Activated CD4-positive, alpha-beta T cell treated with anti-CD3 and anti-CD28 coated beads for 36 hours (primary cell): ENCODE measurements at regions of chr15 and their contacts with region 1.

Region 1: GRCh38 chr15:75453703-75454470 is 2.4 kb upstream of the SIN3A start:
- DNase-seq: peak; percentile 98
- ATAC-seq: peak; percentile 40
- H3K4me3 Mint-ChIP-seq: peak overlapping the region; percentile 99
- H3K27ac Mint-ChIP-seq: peak overlapping the region; percentile 96
- H3K4me1 Mint-ChIP-seq: peaks cover 18% of the 10 kb centered on the region
- H3K27me3 Mint-ChIP-seq: no peaks in the 10 kb centered on the region

Region 2: GRCh38 chr15:73633111-73633990 is 1820.5 kb before region 1 on chr15 and contains the start of gene NPTN:
- CTCF ChIA-PET with region 1: no interaction called
- POLR2A ChIA-PET with region 1: no interaction called
- intact Hi-C with region 1: loop called in 1 of 2 experiments (anchors 5 kb)
- DNase-seq: peak; percentile 99
- ATAC-seq: peak; percentile 91
- H3K4me3 Mint-ChIP-seq: peak within 1 kb of the TSS; percentile 86
- H3K27ac Mint-ChIP-seq: peak within 1 kb of the TSS; percentile 71
- H3K4me1 Mint-ChIP-seq: peaks cover 52% of the 10 kb centered on the region
- H3K27me3 Mint-ChIP-seq: peaks cover 14% of the 10 kb centered on the region
- total RNA-seq, gene NPTN: 43.5 to 73.4 TPM

Region 3: GRCh38 chr15:74781431-74782258 is 672.2 kb before region 1 on chr15 and contains the start of gene CSK:
- CTCF ChIA-PET with region 1: no interaction called
- POLR2A ChIA-PET with region 1: interaction called, 5 read pairs
- intact Hi-C with region 1: loop called (anchors 1 to 2 kb)
- DNase-seq: peak; percentile 84
- ATAC-seq: peak; percentile 27
- H3K4me3 Mint-ChIP-seq: peak within 1 kb of the TSS; percentile 89
- H3K27ac Mint-ChIP-seq: peak within 1 kb of the TSS; percentile 100
- H3K4me1 Mint-ChIP-seq: peaks cover 56% of the 10 kb centered on the region
- H3K27me3 Mint-ChIP-seq: no peaks in the 10 kb centered on the region
- total RNA-seq, gene CSK: 229 to 272 TPM

Region 4: DNA sequence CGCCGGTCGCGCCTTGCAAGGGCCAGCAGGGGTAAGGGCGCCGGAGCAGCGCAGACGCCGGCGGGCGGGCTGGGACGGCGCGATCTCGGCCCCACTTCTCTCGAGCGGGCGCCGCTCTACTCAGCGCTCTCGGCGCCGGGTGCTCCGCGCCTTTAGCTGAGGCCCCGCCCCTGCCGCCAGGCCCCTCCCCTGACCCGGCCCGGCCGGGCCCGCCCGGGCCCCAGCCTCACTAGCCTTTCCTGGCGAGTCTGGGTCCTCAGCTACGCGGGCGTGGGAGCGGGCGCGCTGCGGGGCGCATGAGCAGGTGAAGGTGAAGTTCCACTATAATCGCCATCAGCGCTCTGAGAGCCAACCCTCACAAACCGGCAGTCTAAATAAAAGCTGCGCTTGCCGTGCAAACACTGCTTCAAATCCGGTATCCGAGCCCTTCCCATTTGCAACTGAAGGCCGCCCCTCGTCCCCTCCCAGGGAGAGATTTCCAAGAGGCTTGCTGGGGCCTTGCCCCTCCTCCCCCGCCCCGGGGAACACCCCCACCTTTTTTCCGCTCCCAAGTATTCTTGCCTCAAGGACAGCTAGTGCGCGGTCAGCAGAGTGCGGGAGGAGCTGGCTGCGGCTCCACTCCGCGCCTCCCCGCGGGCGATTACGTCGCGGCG is 497.1 kb before region 1 on chr15 and contains the start of gene RPP25:
- CTCF ChIA-PET with region 1: no interaction called
- POLR2A ChIA-PET with region 1: no interaction called
- intact Hi-C with region 1: loop called in 1 of 2 experiments (anchors 5 kb)
- DNase-seq: peak; percentile 85
- ATAC-seq: peak; percentile 84
- H3K4me3 Mint-ChIP-seq: peak within 1 kb of the TSS; percentile 65
- H3K27ac Mint-ChIP-seq: no peak within 1 kb of the TSS
- H3K4me1 Mint-ChIP-seq: peaks cover 46% of the 10 kb centered on the region
- H3K27me3 Mint-ChIP-seq: peaks cover 25% of the 10 kb centered on the region
- total RNA-seq, gene RPP25: 5.4 to 6.2 TPM

Region 5: GRCh38 chr15:75335705-75336355 is 118.1 kb before region 1 on chr15 and contains the start of gene COMMD4:
- CTCF ChIA-PET with region 1: no interaction called
- POLR2A ChIA-PET with region 1: no interaction called
- intact Hi-C with region 1: loop called in 1 of 2 experiments (anchors 1 kb)
- DNase-seq: peak; percentile 95
- ATAC-seq: peak; percentile 88
- H3K4me3 Mint-ChIP-seq: peak within 1 kb of the TSS; percentile 94
- H3K27ac Mint-ChIP-seq: peak within 1 kb of the TSS; percentile 88
- H3K4me1 Mint-ChIP-seq: peaks cover 12% of the 10 kb centered on the region
- H3K27me3 Mint-ChIP-seq: no peaks in the 10 kb centered on the region
- total RNA-seq, gene COMMD4: 47.1 to 67.8 TPM

Region 6: DNA sequence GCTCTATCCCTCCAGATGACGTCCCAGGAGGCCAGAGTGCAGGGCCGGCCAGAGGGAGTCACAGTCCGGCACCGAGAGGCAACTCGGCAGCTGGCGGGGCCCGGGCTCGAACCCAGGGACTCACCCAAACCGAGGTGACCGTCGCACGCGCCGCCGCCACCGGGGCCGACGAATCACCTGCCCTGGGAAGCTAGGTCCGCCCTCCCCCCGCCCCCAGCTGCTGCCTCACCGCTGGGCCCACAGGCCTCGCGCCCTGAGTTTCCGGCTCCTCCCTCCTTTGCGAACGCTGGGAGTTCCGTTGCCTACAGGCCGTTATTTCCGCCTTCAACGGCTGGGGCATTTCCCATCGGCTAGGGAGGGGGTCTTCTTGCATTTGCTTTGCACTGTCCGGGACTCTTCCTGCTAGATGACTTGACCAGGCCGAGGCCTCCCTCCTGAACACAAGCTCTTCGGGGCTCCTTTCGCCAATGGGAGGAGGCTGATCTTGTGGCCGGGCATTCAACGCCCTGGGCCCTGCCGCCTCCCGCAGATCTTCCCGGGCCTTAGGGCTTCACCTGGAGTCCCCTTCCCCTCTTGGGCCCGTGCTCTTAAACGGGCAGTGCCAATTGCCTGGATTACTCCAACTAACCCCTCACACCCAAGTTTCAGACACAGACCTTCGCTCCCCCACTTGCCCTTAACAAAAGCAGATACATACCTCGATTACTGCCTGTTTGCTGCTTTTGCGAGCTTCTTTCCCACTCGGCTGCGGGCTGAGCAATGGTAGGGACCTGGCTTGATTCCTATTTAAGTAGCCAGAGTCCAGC is 171.9 kb after region 1 on chr15 and contains the start of gene SNUPN:
- CTCF ChIA-PET with region 1: interaction called, 8 read pairs
- POLR2A ChIA-PET with region 1: interaction called, 14 read pairs
- intact Hi-C with region 1: loop called (anchors 1 kb)
- DNase-seq: peak; percentile 97
- ATAC-seq: peak; percentile 88
- H3K4me3 Mint-ChIP-seq: peak within 1 kb of the TSS; percentile 93
- H3K27ac Mint-ChIP-seq: peak within 1 kb of the TSS; percentile 99
- H3K4me1 Mint-ChIP-seq: peaks cover 45% of the 10 kb centered on the region
- H3K27me3 Mint-ChIP-seq: no peaks in the 10 kb centered on the region
- total RNA-seq, gene SNUPN: 37.4 to 40.3 TPM

Region 7: GRCh38 chr15:75903331-75904239 is 449.7 kb after region 1 on chr15 and contains the start of gene FBXO22:
- CTCF ChIA-PET with region 1: no interaction called
- POLR2A ChIA-PET with region 1: no interaction called
- intact Hi-C with region 1: loop called in 1 of 2 experiments (anchors 2 kb)
- DNase-seq: peak; percentile 97
- ATAC-seq: peak; percentile 97
- H3K4me3 Mint-ChIP-seq: peak within 1 kb of the TSS; percentile 97
- H3K27ac Mint-ChIP-seq: peak within 1 kb of the TSS; percentile 98
- H3K4me1 Mint-ChIP-seq: peaks cover 40% of the 10 kb centered on the region
- H3K27me3 Mint-ChIP-seq: no peaks in the 10 kb centered on the region
- total RNA-seq, gene FBXO22: 51.4 to 59.2 TPM